ENCODE measurements at regions of chr6 and their contacts with region 1.

Region 1: GRCh38 chr6:34986845-34987246 is 97.8 kb downstream of the ANKS1A start:
- DNase-seq: peak; percentile 83 to 92
- H3K4me3 ChIP-seq: no peak overlapping the region
- H3K4me1 ChIP-seq: peaks cover 5% of the 10 kb centered on the region
- H3K27me3 ChIP-seq: no peaks in the 10 kb centered on the region

Region 2: GRCh38 chr6:35139908-35140655 is 153.2 kb after region 1 on chr6:
- in situ Hi-C with region 1: loop called (anchors 5 kb)
- DNase-seq: peak; percentile 79 to 82
- H3K4me3 ChIP-seq: no peak overlapping the region
- H3K4me1 ChIP-seq: peaks cover 20% of the 10 kb centered on the region
- H3K27me3 ChIP-seq: no peaks in the 10 kb centered on the region

Region 3: DNA sequence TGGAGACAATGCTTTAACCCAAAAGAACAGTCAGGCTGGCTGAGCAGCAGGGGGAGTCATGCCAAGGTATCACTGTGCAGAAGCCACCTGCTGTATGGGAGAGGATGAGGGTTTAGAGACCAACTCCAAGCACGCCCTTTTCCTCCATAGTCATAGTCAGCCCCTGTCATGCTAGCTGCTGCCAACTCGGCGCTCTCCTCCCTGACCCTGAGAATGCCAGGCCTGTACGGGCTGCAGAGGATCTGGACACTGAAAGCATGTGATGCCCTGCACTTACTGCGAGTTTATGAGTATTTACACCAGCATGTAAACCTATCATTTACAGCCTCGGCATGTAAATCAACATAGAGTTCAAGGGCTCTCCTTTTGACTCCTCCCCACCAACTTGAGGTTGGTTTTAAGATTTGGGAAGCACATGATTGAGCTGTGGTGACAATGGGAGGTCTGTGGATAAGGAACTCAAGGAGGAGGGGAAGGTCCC is 215.3 kb after region 1 on chr6:
- in situ Hi-C with region 1: loop called (anchors 10 kb)
- DNase-seq: no peak
- H3K4me3 ChIP-seq: no peak overlapping the region
- H3K4me1 ChIP-seq: peaks cover 14% of the 10 kb centered on the region
- H3K27me3 ChIP-seq: peaks cover 7% of the 10 kb centered on the region; the same call in 1 of the 2 replicates

Region 4: DNA sequence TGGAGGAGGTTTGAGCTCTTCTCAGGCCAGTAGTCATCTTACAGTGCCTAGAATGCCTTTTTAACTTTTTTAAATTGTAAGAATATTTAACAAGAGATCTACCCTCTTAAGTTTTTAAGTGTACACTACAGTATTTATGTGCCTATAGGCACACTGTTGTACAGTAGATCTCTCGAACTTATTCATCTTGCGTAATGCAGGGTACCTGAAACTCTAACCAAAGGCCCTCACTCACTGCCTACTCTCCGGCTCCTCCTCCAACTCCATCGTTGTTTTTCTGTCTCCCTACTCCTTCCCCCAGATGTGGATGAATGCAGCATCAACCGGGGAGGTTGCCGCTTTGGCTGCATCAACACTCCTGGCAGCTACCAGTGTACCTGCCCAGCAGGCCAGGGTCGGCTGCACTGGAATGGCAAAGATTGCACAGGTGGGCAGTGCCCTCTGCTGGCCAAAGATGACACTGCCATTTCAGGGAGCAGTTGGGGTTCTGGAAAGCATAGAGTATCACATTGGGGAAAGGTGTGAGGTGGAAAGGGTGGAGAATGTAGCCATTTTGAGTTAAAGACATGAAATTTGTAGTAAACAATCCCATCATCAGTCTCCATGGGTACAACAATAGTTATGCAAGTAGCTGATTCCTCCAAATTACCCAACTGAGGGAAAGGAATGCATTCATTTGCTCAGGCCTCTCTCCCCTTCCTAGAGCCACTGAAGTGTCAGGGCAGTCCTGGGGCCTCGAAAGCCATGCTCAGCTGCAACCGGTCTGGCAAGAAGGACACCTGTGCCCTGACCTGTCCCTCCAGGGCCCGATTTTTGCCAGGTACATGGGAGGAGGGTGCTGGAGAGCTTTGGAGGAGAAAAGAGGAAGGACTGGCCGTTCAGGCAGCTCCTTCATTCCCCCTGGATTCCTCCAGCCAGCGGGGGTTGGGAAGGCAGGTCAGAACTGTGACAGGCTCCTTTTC is 254.3 kb after region 1 on chr6:
- in situ Hi-C with region 1: loop called (anchors 5 kb)
- DNase-seq: peak; percentile 60 to 86
- H3K4me3 ChIP-seq: no peak overlapping the region
- H3K4me1 ChIP-seq: no peaks in the 10 kb centered on the region
- H3K27me3 ChIP-seq: no peaks in the 10 kb centered on the region